ENCODE measurements at regions of chr11 and their contacts with region 1.

Region 1: DNA sequence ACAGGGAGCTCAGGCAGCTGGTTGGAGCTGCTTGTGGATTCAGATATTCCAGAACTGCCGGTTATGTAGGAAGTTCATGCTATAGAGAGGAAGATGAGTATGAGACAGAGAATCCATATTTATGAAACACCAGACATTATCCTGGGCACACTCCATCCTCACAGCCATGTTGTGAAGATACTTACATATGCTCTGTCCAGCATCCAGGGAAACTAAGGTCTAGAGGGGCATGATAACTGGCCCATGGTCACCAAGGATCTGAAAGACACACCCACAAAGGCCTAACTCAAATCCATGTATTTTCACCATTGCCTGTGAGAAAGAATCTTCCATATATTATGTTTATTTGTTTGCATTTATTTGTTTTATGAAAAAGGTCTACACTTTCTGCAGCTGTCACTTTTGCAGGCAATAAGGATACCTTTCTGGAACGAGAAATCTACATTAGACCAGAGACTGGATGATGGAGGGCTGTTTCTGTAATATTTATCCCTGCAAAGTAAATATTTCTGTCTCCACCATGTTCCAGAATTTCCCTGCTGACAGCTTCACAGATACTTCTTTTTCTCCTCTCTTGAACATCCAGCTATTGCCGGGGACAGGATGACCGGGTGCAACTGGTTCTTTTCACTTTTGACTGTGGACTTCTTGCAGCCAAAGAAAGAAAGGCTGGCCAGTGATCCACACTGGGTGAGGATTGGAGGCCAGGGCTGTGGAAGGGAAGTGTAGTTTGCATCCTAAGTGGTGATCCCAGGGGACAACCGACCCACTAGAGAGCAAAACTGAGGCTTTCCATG is 145.9 kb upstream of the NAV2 start:
- DNase-seq: no peak
- H3K4me3 Mint-ChIP-seq: no peak overlapping the region
- H3K27ac Mint-ChIP-seq: no peak overlapping the region
- H3K4me1 Mint-ChIP-seq: no peaks in the 10 kb centered on the region
- H3K27me3 Mint-ChIP-seq: peaks cover 26% of the 10 kb centered on the region

Region 2: DNA sequence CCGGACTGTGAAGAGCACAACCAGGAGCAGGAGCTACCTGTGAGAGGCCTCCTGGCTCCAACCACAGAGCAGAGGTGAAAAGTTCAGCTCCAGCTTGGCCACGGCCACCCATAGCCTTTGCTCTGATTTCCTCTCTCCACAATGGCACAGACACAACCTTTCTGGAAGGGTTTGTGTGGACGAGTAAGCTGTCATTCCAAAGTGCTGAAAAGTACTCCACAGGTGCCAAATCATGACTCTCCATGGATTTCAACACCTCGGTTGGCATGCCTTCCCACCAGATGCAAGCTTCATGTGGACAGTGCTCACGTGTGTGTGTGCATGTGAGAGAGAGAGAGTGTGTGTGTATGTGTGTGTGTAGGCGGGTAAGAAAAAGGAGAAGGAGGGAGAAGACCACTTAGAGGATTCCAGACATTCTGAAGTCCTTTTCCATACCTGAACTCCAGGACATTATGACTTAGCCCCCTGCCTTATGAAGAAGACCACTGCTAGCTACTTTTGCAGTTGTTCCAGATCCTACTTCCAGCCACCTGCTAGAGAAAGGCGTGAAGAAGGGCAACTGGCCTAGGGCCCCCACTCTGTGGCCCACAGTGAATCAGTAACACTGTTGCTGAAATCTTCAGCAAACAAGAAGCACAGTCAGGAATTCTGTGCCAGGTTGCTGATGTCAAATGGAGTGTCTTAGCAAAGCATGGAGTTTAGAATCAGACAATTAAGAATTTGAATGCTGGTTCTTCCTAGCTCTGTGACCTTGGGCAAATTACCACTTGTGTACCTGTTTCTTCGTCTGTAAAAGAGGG is 131.9 kb after region 1 on chr11:
- CTCF ChIA-PET with region 1: no interaction called
- DNase-seq: no peak
- H3K4me3 Mint-ChIP-seq: no peak overlapping the region
- H3K27ac Mint-ChIP-seq: no peak overlapping the region
- H3K4me1 Mint-ChIP-seq: no peaks in the 10 kb centered on the region
- H3K27me3 Mint-ChIP-seq: peaks cover 46% of the 10 kb centered on the region

Region 3: GRCh38 chr11:19735157-19735908 is 168.6 kb after region 1 on chr11:
- CTCF ChIA-PET with region 1: interaction called, 15 read pairs
- DNase-seq: no peak
- H3K4me3 Mint-ChIP-seq: no peak overlapping the region
- H3K27ac Mint-ChIP-seq: no peak overlapping the region
- H3K4me1 Mint-ChIP-seq: no peaks in the 10 kb centered on the region
- H3K27me3 Mint-ChIP-seq: peaks cover 24% of the 10 kb centered on the region

Region 4: DNA sequence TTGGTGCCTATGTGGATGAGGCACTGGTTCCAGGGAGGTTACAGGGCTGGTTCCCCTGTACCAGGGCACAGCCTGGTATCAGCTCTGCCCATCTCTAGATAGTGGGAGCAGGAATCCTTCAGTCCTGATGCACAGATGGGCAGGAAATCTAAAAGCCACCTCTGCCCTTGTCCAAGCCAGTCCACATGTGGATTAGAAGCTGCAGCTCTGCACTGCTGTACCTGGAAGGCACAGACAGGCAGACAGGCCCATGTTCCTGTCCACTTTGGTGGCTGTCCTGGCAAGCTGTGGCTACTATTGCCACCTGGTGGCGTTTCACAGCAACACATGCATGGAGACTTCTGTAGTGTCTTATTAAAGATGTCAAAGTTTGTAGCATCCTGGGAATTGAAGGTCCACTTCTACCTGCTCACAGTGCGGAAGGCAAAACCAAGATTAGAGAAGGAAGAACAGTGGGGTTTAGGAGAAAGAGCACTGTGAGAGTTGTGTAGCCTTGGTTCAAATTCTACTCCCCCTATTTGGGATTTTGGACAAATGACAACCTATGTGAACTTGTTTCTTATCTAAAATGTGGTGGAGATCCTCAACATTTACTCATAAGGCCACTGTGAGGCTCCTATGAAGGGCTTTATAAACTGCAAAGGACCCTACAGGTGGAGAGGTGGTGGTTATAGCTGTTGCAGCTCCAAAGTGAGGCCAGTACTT is 176.0 kb after region 1 on chr11:
- CTCF ChIA-PET with region 1: interaction called, 89 read pairs
- DNase-seq: peak; percentile 79
- H3K4me3 Mint-ChIP-seq: no peak overlapping the region
- H3K27ac Mint-ChIP-seq: no peak overlapping the region
- H3K4me1 Mint-ChIP-seq: no peaks in the 10 kb centered on the region
- H3K27me3 Mint-ChIP-seq: peaks cover 21% of the 10 kb centered on the region